ENCODE measurements at regions of chr1 and their contacts with region 1.

Region 1: DNA sequence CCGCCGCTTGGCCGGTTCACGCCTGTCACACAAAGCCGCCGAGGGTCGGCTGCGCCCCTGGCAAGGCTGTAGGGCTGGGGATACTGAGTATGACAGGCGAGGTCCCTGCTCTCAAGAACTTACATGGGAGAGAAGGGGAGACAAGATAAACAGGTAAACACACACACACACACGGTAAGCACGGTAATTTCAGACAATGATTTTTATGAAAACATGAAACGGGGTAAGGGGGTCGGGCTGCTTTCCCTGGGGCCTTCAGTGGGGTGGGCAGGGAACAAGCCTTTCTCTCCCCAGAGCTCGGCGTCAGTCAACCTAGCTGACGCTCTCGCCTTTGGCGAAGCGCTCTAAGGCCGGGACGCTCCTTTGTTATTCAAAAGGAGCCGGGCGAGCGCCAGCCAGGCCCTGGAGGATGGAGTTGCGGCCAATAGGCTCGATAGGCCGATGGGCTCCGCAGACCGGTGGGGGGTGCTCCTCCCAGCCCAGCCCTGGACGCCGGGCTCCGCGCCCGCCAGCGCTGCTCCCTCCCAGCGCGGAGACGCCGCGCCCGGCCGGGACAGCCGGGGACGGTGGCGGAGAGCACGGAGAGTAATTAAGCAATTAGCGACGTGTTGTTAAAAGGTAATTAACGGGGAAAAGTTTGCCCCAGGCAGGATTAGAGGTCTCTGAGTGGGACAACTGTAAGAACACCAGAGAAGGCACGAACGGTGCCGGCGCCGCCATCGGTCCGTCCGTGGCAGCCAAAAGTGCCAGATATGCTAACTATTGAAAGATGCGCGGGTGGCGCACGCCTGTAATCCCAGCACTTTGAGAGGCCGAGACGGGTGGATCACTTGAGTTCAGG is 950 bp upstream of the INKA2 start:
- DNase-seq: peak; percentile 58 to 91
- H3K4me3 ChIP-seq: peak overlapping the region; percentile 60 to 61
- H3K27ac ChIP-seq: peak overlapping the region; percentile 90
- H3K4me1 ChIP-seq: peaks cover 31% of the 10 kb centered on the region
- H3K27me3 ChIP-seq: no peaks in the 10 kb centered on the region
- CTCF ChIP-seq: no peak
- POLR2A ChIP-seq: no peak

Region 2: DNA sequence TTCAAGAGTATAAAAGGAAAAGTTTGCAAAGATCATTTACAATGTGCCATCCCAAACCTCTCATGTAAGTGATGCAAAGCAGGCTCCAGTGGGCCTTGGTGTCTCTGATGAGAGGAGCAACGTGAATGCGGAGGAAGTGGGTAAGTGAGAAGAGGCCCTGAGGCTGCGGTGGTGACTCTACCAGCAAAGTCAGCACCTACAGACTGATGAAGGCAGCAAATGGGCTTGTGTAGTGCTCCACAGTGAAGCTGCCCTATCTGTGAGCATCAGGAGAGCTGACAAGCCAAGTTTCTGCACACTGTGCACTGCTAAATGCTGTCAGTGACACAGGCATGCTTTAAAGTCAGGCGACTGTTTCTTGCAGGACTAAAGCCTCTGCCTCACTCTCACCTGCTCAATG is 136.2 kb before region 1 on chr1:
- intact Hi-C with region 1: no loop called
- DNase-seq: no peak
- H3K4me3 ChIP-seq: no peak overlapping the region
- H3K27ac ChIP-seq: no peak overlapping the region
- H3K4me1 ChIP-seq: peaks cover 8% of the 10 kb centered on the region
- H3K27me3 ChIP-seq: no peaks in the 10 kb centered on the region
- CTCF ChIP-seq: no peak
- POLR2A ChIP-seq: no peak

Region 3: DNA sequence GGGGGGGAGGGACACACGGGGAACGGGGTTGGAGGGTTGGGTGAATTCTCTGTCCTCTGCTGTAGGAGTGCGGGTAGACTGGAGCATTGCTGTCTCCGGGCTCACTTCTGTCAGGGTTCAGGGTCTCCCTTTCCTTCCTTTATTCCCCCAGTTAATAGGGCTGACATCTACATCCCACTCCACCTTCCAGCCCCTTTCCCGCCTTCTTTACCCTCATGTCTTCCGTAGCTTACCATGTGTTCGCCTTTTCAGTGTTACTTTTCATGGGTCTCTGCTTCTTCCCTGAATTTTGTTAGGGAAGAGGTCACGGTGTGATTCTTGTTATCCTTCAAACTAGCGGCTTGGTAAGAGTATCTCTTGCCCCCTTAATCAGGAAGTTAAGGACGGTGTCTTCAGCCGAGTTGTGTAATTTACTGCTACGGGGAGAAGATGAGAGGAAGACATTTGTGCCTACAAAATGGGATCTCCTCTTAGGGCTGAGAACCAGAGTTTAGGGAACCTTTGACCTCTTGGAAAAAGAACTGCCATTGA is 119.6 kb before region 1 on chr1:
- intact Hi-C with region 1: no loop called
- DNase-seq: no peak
- H3K4me3 ChIP-seq: peak overlapping the region; percentile 77
- H3K27ac ChIP-seq: peak overlapping the region; percentile 90
- H3K4me1 ChIP-seq: peaks cover 54% of the 10 kb centered on the region
- H3K27me3 ChIP-seq: no peaks in the 10 kb centered on the region
- CTCF ChIP-seq: no peak
- POLR2A ChIP-seq: no peak

Region 4: GRCh38 chr1:111719674-111720132 is 20.4 kb before region 1 on chr1:
- intact Hi-C with region 1: loop called (anchors 2 kb)
- DNase-seq: no peak
- H3K4me3 ChIP-seq: no peak overlapping the region
- H3K27ac ChIP-seq: no peak overlapping the region
- H3K4me1 ChIP-seq: peaks cover 45% of the 10 kb centered on the region
- H3K27me3 ChIP-seq: no peaks in the 10 kb centered on the region
- CTCF ChIP-seq: no peak
- POLR2A ChIP-seq: no peak

Region 5: GRCh38 chr1:111792249-111792648 is 52.1 kb after region 1 on chr1:
- intact Hi-C with region 1: no loop called
- DNase-seq: no peak
- H3K4me3 ChIP-seq: no peak overlapping the region
- H3K27ac ChIP-seq: no peak overlapping the region
- H3K4me1 ChIP-seq: peaks cover 6% of the 10 kb centered on the region
- H3K27me3 ChIP-seq: no peaks in the 10 kb centered on the region
- CTCF ChIP-seq: no peak
- POLR2A ChIP-seq: no peak